ENCODE measurements at regions of chr1 and their contacts with region 1.

Region 1: DNA sequence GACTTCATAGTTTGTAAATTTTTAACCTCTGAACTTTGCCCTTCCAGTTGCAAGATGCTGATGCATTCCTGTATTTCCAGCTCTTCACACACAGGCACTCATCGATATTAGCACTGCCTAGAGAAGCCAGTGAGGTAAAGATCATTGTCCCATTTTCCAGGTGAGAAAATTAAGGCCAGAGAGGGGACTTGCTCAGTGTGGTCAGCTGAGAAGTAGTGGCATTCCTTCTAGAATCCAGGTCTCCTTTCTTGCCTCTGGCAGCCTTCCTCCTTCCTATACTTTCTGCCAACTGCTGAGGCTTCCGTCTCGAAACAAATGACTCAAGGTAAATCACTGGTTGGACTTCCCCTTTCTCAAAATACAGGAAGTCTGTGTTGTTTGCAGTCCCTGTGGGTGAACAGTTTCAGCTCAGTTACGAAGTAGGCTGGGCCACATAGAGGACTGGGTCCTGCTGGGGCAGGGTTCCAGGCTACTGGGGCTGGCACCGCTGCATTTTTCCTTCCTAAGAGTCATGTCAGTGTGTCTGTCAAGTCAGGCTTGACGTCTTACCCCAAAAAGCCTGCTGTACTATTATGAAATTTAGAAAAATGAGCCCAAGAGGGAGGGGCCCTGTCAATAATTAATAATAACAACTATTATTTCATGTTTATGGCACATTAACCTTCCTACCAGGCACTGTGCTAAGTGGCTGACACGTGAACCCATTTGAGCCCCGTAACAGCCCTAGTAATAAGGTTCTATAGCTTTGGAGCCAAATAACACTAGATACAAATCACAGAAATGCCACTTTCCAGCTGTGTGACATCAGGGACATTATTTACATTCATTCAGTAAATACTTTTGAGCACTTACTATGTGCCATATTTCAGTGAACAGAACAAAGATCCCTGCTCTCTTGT is 16.6 kb upstream of the RNF19B start:
- DNase-seq: peak; percentile 92
- ATAC-seq: peak; percentile 95
- H3K4me3 ChIP-seq: peak overlapping the region; percentile 54; the same call in 1 of the 2 replicates
- H3K27ac ChIP-seq: peak overlapping the region; percentile 98
- H3K4me1 ChIP-seq: peaks cover 52% of the 10 kb centered on the region
- H3K27me3 ChIP-seq: no peaks in the 10 kb centered on the region
- CTCF ChIP-seq: no peak
- EP300 ChIP-seq: peak; percentile 41 to 68; a peak in 2 of 4 replicates
- POLR2A ChIP-seq: peak; percentile 91
- RAD21 ChIP-seq: no peak

Region 2: GRCh38 chr1:32958827-32959226 is 22.4 kb before region 1 on chr1:
- CTCF ChIA-PET with region 1: interaction called, 3 read pairs
- POLR2A ChIA-PET with region 1: interaction called, 37 read pairs
- RAD21 ChIA-PET with region 1: interaction called, 10 read pairs
- SMC1A ChIA-PET with region 1: interaction called, 14 read pairs
- in situ Hi-C with region 1: no loop called
- intact Hi-C with region 1: loop called (anchors 2 kb)
- DNase-seq: no peak
- ATAC-seq: no peak
- H3K4me3 ChIP-seq: no peak overlapping the region; the same call in 1 of the 2 replicates
- H3K27ac ChIP-seq: peak overlapping the region; percentile 10; the same call in 1 of the 2 replicates
- H3K4me1 ChIP-seq: peaks cover 19% of the 10 kb centered on the region
- H3K27me3 ChIP-seq: no peaks in the 10 kb centered on the region
- CTCF ChIP-seq: no peak
- EP300 ChIP-seq: no peak
- POLR2A ChIP-seq: no peak
- RAD21 ChIP-seq: no peak

Region 3: GRCh38 chr1:32964461-32965250 is 16.6 kb before region 1 on chr1 and contains the start of gene RNF19B:
- CTCF ChIA-PET with region 1: interaction called, 8 read pairs
- POLR2A ChIA-PET with region 1: interaction called, 37 read pairs
- RAD21 ChIA-PET with region 1: interaction called, 18 read pairs
- SMC1A ChIA-PET with region 1: interaction called, 27 read pairs
- in situ Hi-C with region 1: no loop called
- intact Hi-C with region 1: loop called (anchors 2 kb)
- DNase-seq: peak; percentile 77
- ATAC-seq: peak; percentile 93
- H3K4me3 ChIP-seq: peak within 1 kb of the TSS; percentile 79
- H3K27ac ChIP-seq: peak within 1 kb of the TSS; percentile 27
- H3K4me1 ChIP-seq: peaks cover 4% of the 10 kb centered on the region; the same call in 1 of the 2 replicates
- H3K27me3 ChIP-seq: no peaks in the 10 kb centered on the region
- CTCF ChIP-seq: no peak
- EP300 ChIP-seq: peak in 1 of 2 experiments; percentile 14; a peak in 1 of 4 replicates
- POLR2A ChIP-seq: peak; percentile 95
- RAD21 ChIP-seq: no peak
- polyA plus RNA-seq, gene RNF19B: 4.3 to 9.1 TPM

Region 4: GRCh38 chr1:33022650-33023200 is 41.5 kb after region 1 on chr1:
- CTCF ChIA-PET with region 1: interaction called, 4 read pairs
- POLR2A ChIA-PET with region 1: interaction called, 18 read pairs
- RAD21 ChIA-PET with region 1: interaction called, 3 read pairs
- SMC1A ChIA-PET with region 1: interaction called, 11 read pairs
- in situ Hi-C with region 1: no loop called
- intact Hi-C with region 1: no loop called
- DNase-seq: no peak
- ATAC-seq: no peak
- H3K4me3 ChIP-seq: no peak overlapping the region
- H3K27ac ChIP-seq: no peak overlapping the region
- H3K4me1 ChIP-seq: peaks cover 18% of the 10 kb centered on the region
- H3K27me3 ChIP-seq: no peaks in the 10 kb centered on the region
- CTCF ChIP-seq: no peak
- EP300 ChIP-seq: no peak
- POLR2A ChIP-seq: no peak
- RAD21 ChIP-seq: no peak